Caco-2 (cell line): ENCODE measurements at regions of chr3 and their contacts with region 1.

Region 1: DNA sequence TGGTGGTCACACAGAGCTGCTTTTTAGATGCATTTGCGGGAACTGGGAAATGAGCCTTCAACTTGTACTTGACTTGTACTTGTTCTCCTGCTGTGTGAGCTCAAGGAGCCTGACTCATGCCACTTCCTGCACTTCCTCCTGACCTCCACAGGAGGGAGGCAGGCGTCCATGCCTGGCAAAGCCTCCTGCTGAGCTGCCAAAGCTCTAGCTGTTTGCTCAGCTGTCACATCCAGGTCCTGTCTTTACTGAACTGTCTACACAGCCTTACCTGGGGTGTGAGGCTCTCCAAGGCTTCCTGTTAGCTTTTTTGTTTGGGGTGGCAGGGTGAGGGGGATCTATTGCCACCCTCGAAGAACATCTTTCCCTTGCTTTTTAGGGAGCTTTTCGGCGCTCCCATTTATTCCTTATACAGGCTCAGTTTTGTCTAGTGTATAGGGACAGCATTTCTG is 6.4 kb downstream of the THPO start:
- DNase-seq: peak; percentile 85 to 88
- H3K4me3 ChIP-seq: no peak overlapping the region
- H3K4me3 Mint-ChIP-seq: no peak overlapping the region
- H3K27ac Mint-ChIP-seq: no peak overlapping the region
- H3K4me1 ChIP-seq: no peaks in the 10 kb centered on the region
- H3K4me1 Mint-ChIP-seq: peaks cover 7% of the 10 kb centered on the region
- H3K27me3 ChIP-seq: no peaks in the 10 kb centered on the region
- H3K27me3 Mint-ChIP-seq: no peaks in the 10 kb centered on the region
- CTCF ChIP-seq: peak; percentile 95 to 99

Region 2: DNA sequence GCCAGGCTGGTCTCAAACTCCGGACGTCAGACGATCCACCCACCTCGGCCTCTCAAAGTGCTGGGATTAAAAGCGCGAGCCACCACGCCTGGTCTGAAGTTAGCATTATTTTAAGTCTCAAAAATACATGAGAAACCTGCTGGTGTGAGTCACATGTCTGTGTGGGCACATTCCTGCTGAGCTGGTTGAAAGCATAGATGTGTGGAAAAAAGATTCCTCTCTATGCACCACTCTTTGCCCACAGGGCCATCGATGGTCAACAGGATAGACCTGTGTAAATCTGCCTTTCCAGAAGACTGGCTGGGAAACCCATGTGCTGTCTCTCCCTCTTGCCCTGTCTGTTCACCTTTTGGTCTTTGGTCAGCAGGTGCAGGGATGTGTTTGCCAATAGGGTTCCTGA is 71.8 kb after region 1 on chr3:
- CTCF ChIA-PET with region 1: interaction called, 11 read pairs
- POLR2A ChIA-PET with region 1: no interaction called
- intact Hi-C with region 1: no loop called
- DNase-seq: no peak
- H3K4me3 ChIP-seq: no peak overlapping the region
- H3K4me3 Mint-ChIP-seq: no peak overlapping the region
- H3K27ac Mint-ChIP-seq: no peak overlapping the region
- H3K4me1 ChIP-seq: peaks cover 21% of the 10 kb centered on the region
- H3K4me1 Mint-ChIP-seq: peaks cover 28% of the 10 kb centered on the region
- H3K27me3 ChIP-seq: no peaks in the 10 kb centered on the region
- H3K27me3 Mint-ChIP-seq: no peaks in the 10 kb centered on the region
- CTCF ChIP-seq: no peak

Region 3: DNA sequence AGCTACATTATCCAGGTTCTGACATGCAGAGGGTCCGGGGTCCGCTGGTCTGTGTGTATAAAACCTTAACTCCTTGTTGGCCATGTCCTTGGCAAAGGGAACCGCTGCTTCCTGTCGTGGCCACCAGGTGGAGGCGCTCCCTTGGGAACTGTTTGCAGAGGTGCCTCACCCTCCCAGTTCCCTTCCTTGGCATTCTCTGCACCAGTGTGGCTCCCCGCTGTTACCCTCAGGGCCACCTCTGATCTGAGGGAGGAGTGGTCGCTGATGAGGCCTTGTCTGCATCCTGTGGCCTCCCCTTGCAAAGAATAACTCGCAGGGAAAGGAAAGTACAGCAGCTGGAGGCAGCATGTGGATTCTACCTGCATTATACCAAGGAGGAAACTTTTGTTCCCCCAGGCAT is 97.8 kb after region 1 on chr3:
- CTCF ChIA-PET with region 1: interaction called, 28 read pairs
- POLR2A ChIA-PET with region 1: no interaction called
- intact Hi-C with region 1: loop called (anchors 1 kb)
- DNase-seq: peak; percentile 60 to 63
- H3K4me3 ChIP-seq: no peak overlapping the region
- H3K4me3 Mint-ChIP-seq: no peak overlapping the region
- H3K27ac Mint-ChIP-seq: no peak overlapping the region
- H3K4me1 ChIP-seq: 0 out of 2 replicates have a peak, but pooled peaks cover 6% of the 10 kb centered on the region
- H3K4me1 Mint-ChIP-seq: no peaks in the 10 kb centered on the region
- H3K27me3 ChIP-seq: no peaks in the 10 kb centered on the region
- H3K27me3 Mint-ChIP-seq: peaks cover 5% of the 10 kb centered on the region
- CTCF ChIP-seq: peak; percentile 77 to 78

Region 4: GRCh38 chr3:184513276-184514170 is 141.9 kb after region 1 on chr3:
- CTCF ChIA-PET with region 1: interaction called, 117 read pairs
- POLR2A ChIA-PET with region 1: interaction called, 4 read pairs
- intact Hi-C with region 1: loop called (anchors 1 kb)
- DNase-seq: peak; percentile 84 to 90
- H3K4me3 ChIP-seq: peak overlapping the region; percentile 59
- H3K4me3 Mint-ChIP-seq: peak overlapping the region; percentile 33
- H3K27ac Mint-ChIP-seq: no peak overlapping the region
- H3K4me1 ChIP-seq: no peaks in the 10 kb centered on the region
- H3K4me1 Mint-ChIP-seq: no peaks in the 10 kb centered on the region
- H3K27me3 ChIP-seq: no peaks in the 10 kb centered on the region
- H3K27me3 Mint-ChIP-seq: peaks cover 15% of the 10 kb centered on the region
- CTCF ChIP-seq: peak; percentile 87

Region 5: DNA sequence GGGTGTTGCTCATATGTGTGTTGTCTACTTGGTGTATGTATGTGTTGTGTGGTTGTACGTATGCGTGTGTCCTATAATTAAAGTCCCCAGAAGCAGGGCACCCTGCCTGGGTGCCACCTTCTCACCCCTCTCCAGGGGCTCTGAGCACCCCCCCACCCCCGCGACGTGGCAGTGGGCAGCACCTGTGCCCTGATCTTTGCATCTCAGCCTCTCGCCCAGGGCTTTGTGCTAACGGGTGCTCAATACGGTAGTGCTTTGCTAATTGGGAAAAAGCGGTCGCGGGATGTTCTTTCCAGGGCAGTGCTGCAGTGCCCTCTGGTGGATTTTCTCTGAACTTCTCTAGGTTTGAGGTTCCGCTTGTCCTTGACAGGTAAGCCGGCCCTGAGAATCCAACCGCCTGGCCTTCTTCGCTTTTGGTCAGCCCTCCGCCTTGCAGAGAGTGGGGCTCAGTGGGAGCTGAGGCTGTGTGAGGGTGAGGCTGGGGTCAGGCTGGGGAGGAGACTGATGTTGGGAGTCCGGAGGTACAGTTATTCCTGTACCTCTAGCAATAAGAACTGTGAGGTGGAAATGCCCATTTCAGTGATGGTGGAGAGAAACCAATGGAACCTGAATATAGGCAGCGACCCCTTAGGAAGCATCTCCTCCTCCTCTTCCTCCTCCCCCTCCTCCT is 172.4 kb after region 1 on chr3:
- CTCF ChIA-PET with region 1: interaction called, 71 read pairs
- POLR2A ChIA-PET with region 1: no interaction called
- intact Hi-C with region 1: loop called (anchors 1 kb)
- DNase-seq: peak; percentile 80 to 87
- H3K4me3 ChIP-seq: no peak overlapping the region
- H3K4me3 Mint-ChIP-seq: no peak overlapping the region
- H3K27ac Mint-ChIP-seq: no peak overlapping the region
- H3K4me1 ChIP-seq: no peaks in the 10 kb centered on the region
- H3K4me1 Mint-ChIP-seq: no peaks in the 10 kb centered on the region
- H3K27me3 ChIP-seq: no peaks in the 10 kb centered on the region
- H3K27me3 Mint-ChIP-seq: peaks cover 6% of the 10 kb centered on the region
- CTCF ChIP-seq: peak; percentile 77 to 89

Region 6: DNA sequence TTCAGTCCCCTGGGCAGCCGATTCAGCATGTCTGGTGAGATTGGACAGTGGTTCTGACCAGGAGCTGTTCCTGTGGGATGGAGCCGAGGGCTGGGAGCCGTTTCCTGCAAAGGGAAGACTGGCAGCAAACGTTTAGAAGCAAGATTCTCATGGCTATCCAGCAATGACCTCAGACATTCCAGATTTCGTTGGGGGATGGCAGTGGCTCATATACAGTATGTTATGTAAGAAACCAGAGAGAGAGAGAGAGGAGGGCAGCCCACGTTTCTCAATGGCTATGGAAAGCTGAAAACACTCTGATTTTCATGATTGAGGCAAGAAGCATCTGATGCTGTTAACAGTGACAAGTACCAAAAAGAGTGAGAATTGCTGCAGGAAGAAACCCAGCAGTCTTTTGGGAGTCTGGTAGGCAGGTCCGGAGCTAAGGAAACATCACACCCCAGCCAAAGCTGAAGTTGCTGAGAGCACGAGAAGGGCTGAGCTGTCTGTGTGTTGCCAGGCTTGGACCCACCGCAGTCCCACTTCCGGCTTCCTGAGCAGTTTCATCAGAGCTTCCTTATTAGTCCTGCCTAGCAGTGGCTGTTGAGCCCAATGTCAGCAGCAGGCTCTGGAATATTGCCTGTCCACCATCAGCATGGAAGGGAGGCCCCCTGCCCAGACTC is 414.8 kb after region 1 on chr3:
- CTCF ChIA-PET with region 1: no interaction called
- POLR2A ChIA-PET with region 1: no interaction called
- intact Hi-C with region 1: no loop called
- DNase-seq: no peak
- H3K4me3 ChIP-seq: no peak overlapping the region
- H3K4me3 Mint-ChIP-seq: no peak overlapping the region
- H3K27ac Mint-ChIP-seq: no peak overlapping the region
- H3K4me1 ChIP-seq: no peaks in the 10 kb centered on the region
- H3K4me1 Mint-ChIP-seq: peaks cover 5% of the 10 kb centered on the region
- H3K27me3 ChIP-seq: no peaks in the 10 kb centered on the region; the same call in 1 of the 2 replicates
- H3K27me3 Mint-ChIP-seq: peaks cover 4% of the 10 kb centered on the region
- CTCF ChIP-seq: no peak